ENCODE measurements at regions of chr2 and their contacts with region 1.

Region 1: GRCh38 chr2:237744613-237745249 is 53.8 kb upstream of the RBM44 start:
- DNase-seq: no peak
- H3K4me3 ChIP-seq: no peak overlapping the region
- H3K27ac ChIP-seq: peak overlapping the region; percentile 10
- H3K4me1 ChIP-seq: peaks cover 42% of the 10 kb centered on the region
- H3K27me3 ChIP-seq: no peaks in the 10 kb centered on the region
- CTCF ChIP-seq: peak; percentile 88 to 97 (median 95)
- POLR2A ChIP-seq: no peak

Region 2: DNA sequence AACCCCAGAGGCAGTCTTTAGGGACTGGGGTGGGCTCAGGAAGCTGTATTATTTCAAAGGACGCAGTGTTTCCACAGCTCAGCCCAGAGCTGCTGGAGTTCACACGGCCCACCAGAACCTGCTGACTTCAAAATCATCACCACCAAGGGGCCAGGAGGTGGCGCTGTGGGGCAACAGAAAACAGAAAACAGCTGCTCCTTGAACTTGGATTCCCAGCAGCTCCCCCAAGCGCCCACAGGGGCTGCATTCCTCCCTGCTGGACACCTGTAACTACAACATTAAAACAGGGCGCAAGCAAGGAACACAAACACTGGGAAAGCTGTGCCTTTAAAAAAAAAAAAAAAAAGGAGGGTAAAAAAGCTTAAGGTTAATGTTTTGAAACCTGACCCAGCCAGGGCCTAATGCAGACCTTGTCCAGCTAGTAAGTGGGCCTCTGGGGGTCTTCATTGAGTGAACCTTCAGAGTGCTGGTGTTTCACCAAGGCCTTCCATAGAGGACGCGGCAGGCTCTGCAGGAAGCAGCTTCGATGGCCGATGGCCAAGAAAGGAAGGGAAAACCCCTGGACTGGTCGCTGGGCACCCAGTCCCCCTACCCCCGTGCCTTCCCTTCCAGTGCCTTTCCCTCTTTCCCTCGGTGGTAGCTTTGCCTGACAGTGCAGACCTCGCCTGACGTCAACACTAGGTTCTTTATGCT is 231.8 kb before region 1 on chr2:
- intact Hi-C with region 1: loop called (anchors 10 kb)
- DNase-seq: no peak
- H3K4me3 ChIP-seq: no peak overlapping the region
- H3K27ac ChIP-seq: peak overlapping the region; percentile 88
- H3K4me1 ChIP-seq: peaks cover 61% of the 10 kb centered on the region
- H3K27me3 ChIP-seq: no peaks in the 10 kb centered on the region
- CTCF ChIP-seq: peak; percentile 86 to 93 (median 88)
- POLR2A ChIP-seq: no peak

Region 3: DNA sequence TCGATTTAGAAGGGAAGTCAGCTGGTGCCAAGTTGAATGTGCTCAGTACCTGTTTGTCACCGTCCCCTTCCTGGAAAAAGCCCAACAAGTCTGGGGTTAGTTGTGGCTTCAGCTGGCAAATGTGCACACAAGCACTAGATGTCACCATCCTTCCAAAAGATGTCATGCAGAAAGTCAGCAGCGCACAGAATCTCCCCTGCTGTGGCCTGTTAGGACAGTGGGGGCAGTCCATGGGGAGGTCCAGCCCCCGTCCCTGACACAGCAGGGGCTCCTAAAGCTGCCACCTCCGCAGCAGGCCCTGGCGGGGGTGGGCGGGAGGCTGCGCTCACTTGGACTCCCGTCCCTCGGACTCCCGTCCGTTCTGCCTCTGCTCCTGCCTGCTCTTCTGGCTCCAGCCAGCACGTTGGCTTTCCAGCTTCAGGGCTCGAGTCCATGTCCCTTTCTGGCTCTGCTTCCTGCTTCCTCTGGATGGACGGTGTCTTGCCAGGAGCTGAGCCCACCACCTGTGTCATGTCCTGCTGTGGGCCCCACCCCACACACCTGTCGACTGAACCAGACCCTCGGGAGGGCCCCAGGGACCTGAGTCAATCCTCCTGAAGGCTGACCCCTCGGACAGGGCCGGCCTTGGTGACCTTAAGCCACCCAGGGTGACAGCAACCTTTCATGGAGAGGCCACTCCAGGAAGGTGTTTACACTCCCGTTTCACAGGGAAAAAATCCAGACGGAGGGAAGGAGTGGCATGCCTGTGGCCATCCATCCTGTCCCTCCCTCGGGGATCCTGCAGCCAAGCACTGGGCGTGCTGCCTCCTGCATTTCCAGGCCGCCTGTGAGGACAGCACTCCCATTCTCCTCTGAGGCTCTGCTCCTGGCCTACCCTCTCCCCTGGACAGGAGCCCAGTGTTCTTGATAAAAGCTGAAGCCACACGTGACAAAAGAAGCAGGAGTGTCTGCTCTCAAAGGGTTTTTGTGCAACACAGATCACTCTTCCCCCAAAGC is 162.7 kb before region 1 on chr2:
- intact Hi-C with region 1: loop called (anchors 5 kb)
- DNase-seq: peak in 1 of 2 donors; percentile 92
- H3K4me3 ChIP-seq: no peak overlapping the region
- H3K27ac ChIP-seq: peak overlapping the region; percentile 61
- H3K4me1 ChIP-seq: peaks cover 12% of the 10 kb centered on the region
- H3K27me3 ChIP-seq: no peaks in the 10 kb centered on the region
- CTCF ChIP-seq: peak in 2 of 3 experiments; percentile 7 to 52
- POLR2A ChIP-seq: no peak

Region 4: GRCh38 chr2:237674731-237675276 is 69.9 kb before region 1 on chr2:
- intact Hi-C with region 1: loop called (anchors 5 kb)
- DNase-seq: no peak
- H3K4me3 ChIP-seq: peak overlapping the region; percentile 15 to 25
- H3K27ac ChIP-seq: peak overlapping the region; percentile 79
- H3K4me1 ChIP-seq: peaks cover 65% of the 10 kb centered on the region
- H3K27me3 ChIP-seq: no peaks in the 10 kb centered on the region
- CTCF ChIP-seq: no peak
- POLR2A ChIP-seq: no peak

Region 5: DNA sequence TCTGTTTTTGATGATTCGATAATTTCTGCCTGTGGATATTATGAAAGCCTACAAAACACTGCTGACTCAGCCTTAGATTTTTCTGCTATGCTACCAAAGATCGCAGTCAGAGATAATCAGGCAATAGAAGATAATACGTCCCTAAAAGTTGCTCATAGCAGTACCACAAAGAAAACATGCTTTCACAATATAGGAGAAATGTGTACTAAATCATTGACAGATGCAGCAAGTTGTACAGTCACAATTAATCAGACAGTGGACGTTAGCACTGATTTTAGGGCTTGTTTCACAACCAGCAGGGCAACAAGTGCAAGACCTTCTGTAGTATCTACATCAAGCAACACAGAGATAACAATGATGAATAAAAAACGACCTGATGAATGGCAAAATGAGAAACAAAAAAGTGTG is 73.3 kb after region 1 on chr2:
- intact Hi-C with region 1: no loop called
- DNase-seq: no peak
- H3K4me3 ChIP-seq: no peak overlapping the region
- H3K27ac ChIP-seq: no peak overlapping the region
- H3K4me1 ChIP-seq: no peaks in the 10 kb centered on the region
- H3K27me3 ChIP-seq: no peaks in the 10 kb centered on the region
- CTCF ChIP-seq: no peak
- POLR2A ChIP-seq: no peak

Region 6: DNA sequence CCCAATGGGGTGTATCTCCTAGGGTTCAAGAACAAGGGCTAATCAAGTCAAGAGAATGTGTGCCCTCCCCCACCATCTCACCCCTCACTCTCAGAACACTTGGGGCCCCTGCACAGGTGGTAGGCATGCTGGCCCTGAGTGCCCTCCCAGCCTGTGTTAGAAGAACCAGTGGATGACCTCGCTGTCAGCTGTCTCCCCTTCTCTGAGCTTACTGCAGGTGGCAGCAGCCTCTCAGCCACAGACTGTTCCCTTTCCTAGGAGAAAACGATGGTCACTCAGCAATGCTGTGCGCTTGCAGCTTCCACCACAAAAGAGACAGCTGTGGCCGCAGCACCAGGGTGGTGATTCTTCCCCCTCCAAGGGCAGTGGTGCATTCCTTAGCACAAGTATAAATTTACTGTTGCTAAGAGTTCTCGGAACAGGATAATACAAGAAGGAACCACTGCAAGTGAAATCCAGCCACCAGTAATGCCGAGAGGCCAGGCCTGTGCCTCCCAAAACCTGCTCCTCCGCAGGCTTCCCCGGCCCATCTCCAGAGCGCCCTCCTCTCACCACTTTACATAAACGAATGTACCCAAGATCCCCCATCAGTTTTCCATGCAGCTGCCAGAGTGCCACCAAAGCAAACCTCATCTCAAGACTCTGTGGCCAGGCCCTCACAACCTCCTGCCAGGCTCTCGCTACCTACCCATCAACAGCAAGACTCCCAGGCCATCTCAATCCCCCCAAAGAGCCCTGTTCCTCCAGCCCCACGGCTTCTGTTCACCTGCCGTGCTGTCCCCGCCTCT is 113.8 kb after region 1 on chr2:
- intact Hi-C with region 1: no loop called
- DNase-seq: peak in 1 of 2 donors; percentile 90
- H3K4me3 ChIP-seq: peak overlapping the region; percentile 57 to 68
- H3K27ac ChIP-seq: peak overlapping the region; percentile 87
- H3K4me1 ChIP-seq: peaks cover 23% of the 10 kb centered on the region
- H3K27me3 ChIP-seq: no peaks in the 10 kb centered on the region
- CTCF ChIP-seq: peak; percentile 67 to 75 (median 73)
- POLR2A ChIP-seq: no peak